Testis (tissue), 5 donors: ENCODE measurements at regions of chr1 and their contacts with region 1.

Region 1: DNA sequence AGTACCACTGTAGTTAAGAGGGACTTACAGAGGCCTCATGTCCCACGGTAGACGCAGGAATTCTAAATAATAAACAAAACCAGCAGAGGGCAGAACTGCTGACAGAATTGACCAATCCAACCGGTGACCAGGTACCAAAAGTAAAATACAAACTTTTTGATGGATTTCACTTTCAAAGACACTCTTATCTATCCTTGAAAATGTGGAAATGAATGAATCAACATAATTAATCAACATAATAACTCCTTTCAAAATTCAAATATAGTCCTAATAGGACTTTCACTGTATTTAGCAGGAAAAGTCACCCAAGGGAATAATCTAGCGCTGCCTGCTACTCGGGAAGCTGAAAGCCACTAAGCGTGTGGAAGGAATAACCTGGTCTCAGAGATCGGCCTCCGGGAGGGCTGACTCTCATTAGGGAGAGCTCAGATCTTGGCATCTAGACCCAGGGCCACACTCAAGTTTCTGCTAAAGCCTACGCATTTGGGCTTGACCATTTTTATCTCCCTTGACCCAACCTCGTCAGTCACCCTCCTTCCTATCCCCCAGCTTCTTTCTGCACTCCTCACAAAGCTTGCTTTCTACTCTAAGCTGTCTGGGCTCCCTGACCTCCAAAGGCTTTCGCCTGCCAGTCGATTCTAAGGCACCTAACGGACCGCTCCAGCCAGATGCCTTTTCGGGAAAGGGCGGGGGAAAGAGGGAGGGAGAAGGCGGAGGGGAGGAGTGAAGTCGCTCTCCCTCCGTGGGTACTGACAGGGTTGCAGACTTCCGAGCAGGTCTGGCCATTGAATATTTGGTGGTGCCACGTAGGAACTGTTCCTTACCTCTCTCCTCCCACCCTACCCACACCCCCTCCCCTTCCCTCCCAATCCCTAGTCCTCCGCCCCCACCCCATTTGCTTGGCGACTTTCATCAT is 1.6 kb downstream of the COL11A1 start:
- DNase-seq: peak; percentile 29
- H3K4me3 ChIP-seq: peak overlapping the region in 1 of 2 donors; percentile 10
- H3K27ac ChIP-seq: no peak overlapping the region
- H3K4me1 ChIP-seq: no peaks in the 10 kb centered on the region
- H3K27me3 ChIP-seq: no peaks in the 10 kb centered on the region
- CTCF ChIP-seq: peak in 2 of 3 experiments; percentile 19 to 47
- POLR2A ChIP-seq: no peak

Region 2: DNA sequence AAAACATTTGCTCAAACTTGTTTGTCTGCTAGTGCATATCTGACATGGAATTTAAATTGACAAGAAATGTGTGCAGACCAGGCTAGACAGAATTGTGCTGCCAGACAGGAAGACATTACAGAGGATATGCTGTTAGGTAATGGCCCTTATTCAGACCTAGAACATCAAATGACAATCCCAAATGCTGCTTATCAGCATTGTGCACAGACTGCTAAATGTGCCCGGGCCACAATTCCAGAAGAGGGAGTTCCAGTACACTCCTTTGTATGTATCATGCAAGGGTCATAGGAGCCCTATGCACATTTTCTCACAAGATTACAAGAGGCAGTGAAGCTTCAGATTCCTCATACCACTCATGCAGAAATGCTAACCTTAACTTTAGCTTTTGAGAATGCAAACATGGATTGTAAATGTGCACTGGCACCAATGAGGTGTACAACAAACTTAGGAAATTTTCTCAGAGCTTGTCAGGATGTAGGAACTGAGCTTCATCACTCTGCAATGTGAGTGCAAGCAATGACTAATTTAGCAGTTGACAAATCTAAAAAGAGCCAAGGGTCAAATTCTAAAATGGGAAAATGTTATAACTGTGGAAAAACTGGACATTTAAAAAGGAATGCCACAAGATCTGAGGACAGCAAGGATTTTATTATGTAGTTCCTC is 271.9 kb before region 1 on chr1:
- intact Hi-C with region 1: no loop called
- DNase-seq: no peak
- H3K4me3 ChIP-seq: no peak overlapping the region
- H3K27ac ChIP-seq: no peak overlapping the region
- H3K4me1 ChIP-seq: no peaks in the 10 kb centered on the region
- H3K27me3 ChIP-seq: no peaks in the 10 kb centered on the region
- CTCF ChIP-seq: no peak
- POLR2A ChIP-seq: no peak

Region 3: DNA sequence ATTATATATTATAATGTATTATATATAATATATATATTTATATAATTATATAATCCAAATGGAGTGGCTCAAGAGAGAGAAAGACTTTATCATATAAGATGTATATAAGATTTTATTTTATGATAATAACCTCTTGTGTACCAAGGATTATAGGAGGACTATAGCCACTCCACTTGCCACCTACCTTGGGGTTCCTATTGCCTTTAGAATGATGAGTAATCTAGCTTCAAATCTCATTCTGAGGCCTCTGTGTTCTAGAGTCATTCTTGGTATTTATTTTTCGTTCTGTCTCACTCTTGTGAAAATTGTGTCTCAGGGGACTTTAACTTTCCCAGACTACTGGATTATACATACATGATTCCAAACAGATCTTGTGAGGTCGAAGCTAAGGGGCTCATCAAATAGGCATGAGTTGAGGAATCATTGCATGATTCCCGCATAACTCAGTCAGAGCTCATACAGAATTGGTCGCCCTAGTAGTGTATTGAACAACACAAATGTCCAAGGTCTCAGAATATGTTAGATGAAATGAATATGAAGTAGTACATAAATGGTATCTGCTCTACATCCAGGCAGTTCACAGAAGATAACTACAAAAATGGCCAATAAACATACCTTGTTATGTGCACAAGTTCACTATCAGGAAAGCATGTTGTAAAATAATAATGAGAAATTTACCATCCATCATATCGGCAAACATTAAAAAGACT is 259.3 kb after region 1 on chr1:
- intact Hi-C with region 1: no loop called
- DNase-seq: no peak
- H3K4me3 ChIP-seq: no peak overlapping the region
- H3K27ac ChIP-seq: no peak overlapping the region
- H3K4me1 ChIP-seq: no peaks in the 10 kb centered on the region
- H3K27me3 ChIP-seq: no peaks in the 10 kb centered on the region
- CTCF ChIP-seq: no peak
- POLR2A ChIP-seq: no peak

Region 4: DNA sequence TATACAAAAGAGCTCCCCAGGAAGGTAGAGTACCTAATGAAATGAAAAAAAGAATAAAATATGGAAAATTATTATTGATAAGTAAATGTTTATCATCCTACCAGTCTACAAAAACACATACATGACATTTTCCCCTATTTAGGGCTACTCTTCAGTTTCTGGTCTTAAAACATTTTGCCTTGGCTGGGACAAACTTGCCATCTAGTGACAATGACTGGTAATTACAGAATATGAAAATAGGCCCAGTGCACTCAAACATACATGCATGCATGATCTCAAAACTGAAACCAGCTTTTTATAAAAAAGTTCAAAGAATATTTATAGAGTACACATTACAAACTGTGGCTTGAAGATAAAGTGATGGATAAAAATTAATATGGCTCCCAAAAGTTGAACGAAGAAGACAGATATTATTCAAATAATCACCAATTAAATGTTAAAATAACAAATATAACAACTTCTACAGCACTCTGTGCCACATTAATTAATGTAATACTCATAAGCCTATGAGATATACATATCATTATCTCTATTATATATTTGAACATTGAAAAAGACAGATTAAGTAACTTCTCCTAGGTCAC is 408.3 kb after region 1 on chr1:
- intact Hi-C with region 1: loop called (anchors 10 kb)
- DNase-seq: peak; percentile 17
- H3K4me3 ChIP-seq: no peak overlapping the region
- H3K27ac ChIP-seq: no peak overlapping the region
- H3K4me1 ChIP-seq: no peaks in the 10 kb centered on the region
- H3K27me3 ChIP-seq: no peaks in the 10 kb centered on the region
- CTCF ChIP-seq: peak; percentile 31 to 67 (median 66)
- POLR2A ChIP-seq: no peak